Left ventricle myocardium inferior (tissue), 1 donor: ENCODE measurements at regions of chr16 and their contacts with region 1.

Region 1: GRCh38 chr16:56317998-56318826 is 107.1 kb downstream of the AMFR start:
- DNase-seq: peak; percentile 81
- H3K4me3 ChIP-seq: peak overlapping the region; percentile 55
- H3K27ac ChIP-seq: no peak overlapping the region
- H3K4me1 ChIP-seq: peaks cover 6% of the 10 kb centered on the region
- H3K27me3 ChIP-seq: no peaks in the 10 kb centered on the region
- CTCF ChIP-seq: peak; percentile 98

Region 2: DNA sequence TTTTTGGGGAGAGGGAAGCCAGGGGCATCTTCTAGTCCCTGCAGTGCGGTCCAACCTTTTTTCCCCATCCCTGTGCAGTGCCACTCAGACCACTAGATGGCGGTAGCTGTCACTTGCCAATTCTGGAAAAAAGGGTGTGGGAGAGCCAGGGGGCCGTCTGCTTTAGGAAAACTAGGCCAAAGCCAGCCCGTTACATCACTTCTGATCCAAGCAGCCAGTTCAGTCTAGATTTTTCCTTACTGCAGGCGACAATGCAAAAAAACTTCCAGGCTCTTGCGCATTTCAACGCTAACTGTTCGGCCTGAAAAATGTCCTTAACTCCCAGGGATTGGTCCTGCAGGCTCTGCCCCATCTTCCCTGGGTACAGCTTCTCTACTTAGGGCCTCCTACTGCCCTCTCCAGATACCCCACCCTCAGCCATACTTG is 373.8 kb before region 1 on chr16:
- intact Hi-C with region 1: loop called (anchors 5 kb)
- DNase-seq: peak; percentile 61
- H3K4me3 ChIP-seq: no peak overlapping the region
- H3K27ac ChIP-seq: peak overlapping the region; percentile 38
- H3K4me1 ChIP-seq: peaks cover 3% of the 10 kb centered on the region
- H3K27me3 ChIP-seq: peaks cover 4% of the 10 kb centered on the region
- CTCF ChIP-seq: peak; percentile 96

Region 3: DNA sequence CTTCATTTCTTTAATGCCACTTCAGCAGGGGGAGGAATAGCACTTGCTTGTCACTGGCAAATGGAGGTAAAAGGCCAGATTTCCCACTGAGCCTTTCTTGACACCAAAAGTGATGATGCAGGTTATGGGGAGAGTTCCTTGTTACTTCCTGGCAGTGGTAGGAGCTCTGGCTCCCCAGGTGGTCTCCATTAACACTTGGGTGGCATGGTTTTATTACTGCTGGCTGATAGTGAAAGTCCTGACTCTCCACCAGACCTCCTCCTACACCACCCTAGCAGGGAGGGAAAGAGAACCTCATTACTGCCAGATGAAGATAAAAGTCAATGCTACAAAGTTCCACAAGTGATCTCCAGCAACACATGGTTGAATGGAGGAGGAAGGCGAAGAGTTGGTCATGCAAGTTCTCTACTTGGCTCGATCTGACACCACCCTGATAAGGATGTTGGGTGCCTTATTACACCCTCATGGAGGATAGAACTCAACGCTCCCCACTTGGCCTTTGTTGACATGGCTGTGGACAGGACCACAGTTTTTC is 279.6 kb before region 1 on chr16:
- intact Hi-C with region 1: loop called (anchors 10 kb)
- DNase-seq: no peak
- H3K4me3 ChIP-seq: no peak overlapping the region
- H3K27ac ChIP-seq: no peak overlapping the region
- H3K4me1 ChIP-seq: no peaks in the 10 kb centered on the region
- H3K27me3 ChIP-seq: no peaks in the 10 kb centered on the region
- CTCF ChIP-seq: no peak

Region 4: GRCh38 chr16:56191156-56191815 is 126.9 kb before region 1 on chr16 and contains the start of gene GNAO1:
- intact Hi-C with region 1: no loop called
- DNase-seq: peak; percentile 81
- H3K4me3 ChIP-seq: peak within 1 kb of the TSS; percentile 86
- H3K27ac ChIP-seq: peak within 1 kb of the TSS; percentile 92
- H3K4me1 ChIP-seq: peaks cover 53% of the 10 kb centered on the region
- H3K27me3 ChIP-seq: peaks cover 41% of the 10 kb centered on the region
- CTCF ChIP-seq: peak; percentile 9
- total RNA-seq, gene GNAO1: 15.4 TPM